ENCODE measurements at regions of chrX and their contacts with region 1.

Region 1: GRCh38 chrX:118603981-118604380 is 108.4 kb downstream of the DOCK11 start:
- DNase-seq: no peak
- ATAC-seq: peak; percentile 62
- H3K4me3 Mint-ChIP-seq: no peak overlapping the region
- H3K27ac Mint-ChIP-seq: peak overlapping the region; percentile 70
- H3K4me1 Mint-ChIP-seq: peaks cover 9% of the 10 kb centered on the region
- H3K27me3 Mint-ChIP-seq: no peaks in the 10 kb centered on the region
- CTCF ChIP-seq: no peak

Region 2: GRCh38 chrX:118459494-118459893 is 144.5 kb before region 1 on chrX:
- CTCF ChIA-PET with region 1: interaction called, 61 read pairs
- POLR2A ChIA-PET with region 1: no interaction called
- intact Hi-C with region 1: loop called (anchors 1 kb)
- DNase-seq: no peak
- ATAC-seq: peak; percentile 37
- H3K4me3 Mint-ChIP-seq: no peak overlapping the region
- H3K27ac Mint-ChIP-seq: no peak overlapping the region
- H3K4me1 Mint-ChIP-seq: no peaks in the 10 kb centered on the region
- H3K27me3 Mint-ChIP-seq: no peaks in the 10 kb centered on the region
- CTCF ChIP-seq: no peak

Region 3: GRCh38 chrX:118484220-118484903 is 119.6 kb before region 1 on chrX:
- CTCF ChIA-PET with region 1: interaction called, 4 read pairs
- POLR2A ChIA-PET with region 1: no interaction called
- intact Hi-C with region 1: loop called (anchors 5 kb)
- DNase-seq: no peak
- ATAC-seq: no peak
- H3K4me3 Mint-ChIP-seq: no peak overlapping the region
- H3K27ac Mint-ChIP-seq: no peak overlapping the region
- H3K4me1 Mint-ChIP-seq: no peaks in the 10 kb centered on the region
- H3K27me3 Mint-ChIP-seq: no peaks in the 10 kb centered on the region
- CTCF ChIP-seq: no peak

Region 4: DNA sequence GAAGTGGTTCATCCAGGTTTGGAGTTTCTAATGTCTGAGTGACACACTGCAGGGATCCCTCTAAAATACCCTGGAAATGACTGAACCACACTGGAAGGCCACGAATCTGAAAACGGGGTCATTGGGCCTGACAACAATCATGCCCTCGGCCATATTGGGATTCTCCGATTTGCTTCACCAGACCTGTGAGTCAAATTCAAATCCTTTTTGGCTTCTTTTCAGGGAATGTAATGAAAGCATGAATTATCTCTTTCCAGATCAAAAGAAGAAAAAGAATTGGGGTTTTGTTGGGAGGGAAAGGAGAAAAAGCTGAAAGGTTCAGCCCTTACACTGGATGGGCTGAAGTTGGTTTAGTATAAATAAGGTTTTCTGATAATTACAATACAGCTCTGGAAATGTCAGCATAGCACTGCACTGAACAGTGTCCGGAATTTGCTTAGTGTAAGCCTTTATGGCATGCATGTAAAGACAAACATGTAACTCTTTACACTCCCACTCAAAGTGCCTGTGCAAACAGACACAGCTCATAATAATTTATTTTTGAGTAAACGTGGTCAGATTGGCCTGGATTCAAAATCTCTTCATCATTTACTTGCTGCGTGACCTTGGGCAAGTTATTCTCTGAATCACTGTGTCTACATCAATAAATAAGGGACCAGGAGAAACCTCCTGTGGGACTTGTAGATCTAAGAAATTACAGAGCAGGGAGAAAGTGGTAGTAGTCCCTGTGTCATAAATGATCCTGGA is 490.2 kb after region 1 on chrX:
- CTCF ChIA-PET with region 1: no interaction called
- POLR2A ChIA-PET with region 1: no interaction called
- intact Hi-C with region 1: no loop called
- DNase-seq: no peak
- ATAC-seq: no peak
- H3K4me3 Mint-ChIP-seq: no peak overlapping the region
- H3K27ac Mint-ChIP-seq: no peak overlapping the region
- H3K4me1 Mint-ChIP-seq: peaks cover 7% of the 10 kb centered on the region
- H3K27me3 Mint-ChIP-seq: peaks cover 7% of the 10 kb centered on the region
- CTCF ChIP-seq: no peak

Measured in activated B cell treated with CpG ODN at 0.5 μM for 24 hours (primary cell).